ENCODE measurements at regions of chr10 and their contacts with region 1.

Region 1: DNA sequence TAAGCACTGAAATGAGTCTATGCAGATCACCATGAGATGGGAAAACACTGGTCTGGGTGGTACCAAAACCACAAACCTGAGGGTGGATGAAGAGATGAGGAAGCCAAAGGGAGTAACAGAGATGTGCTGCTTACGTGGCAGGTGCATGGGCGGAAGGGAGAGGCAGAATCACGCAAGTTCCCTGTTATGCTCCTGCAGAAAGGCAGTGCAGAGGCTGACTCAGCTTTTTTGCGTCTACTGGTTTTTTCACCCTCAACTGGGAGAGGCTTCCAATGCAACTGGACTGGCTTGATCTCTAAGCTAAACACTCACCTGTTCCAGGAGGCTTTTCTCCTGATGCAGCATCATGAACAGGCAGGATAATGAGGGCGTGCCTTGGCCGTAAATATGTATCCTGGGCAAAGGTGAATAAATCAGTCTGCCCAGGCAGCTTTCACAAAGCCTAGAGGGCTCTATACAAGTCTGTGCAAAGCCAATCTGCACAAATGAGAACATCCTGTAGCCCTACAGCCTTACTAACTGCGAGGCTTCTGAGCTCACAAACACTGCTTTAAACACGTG is 95.4 kb upstream of the AFAP1L2 start:
- DNase-seq: peak; percentile 66
- H3K4me3 Mint-ChIP-seq: peak overlapping the region; percentile 23
- H3K27ac Mint-ChIP-seq: peak overlapping the region; percentile 90
- H3K4me1 Mint-ChIP-seq: peaks cover 78% of the 10 kb centered on the region
- H3K27me3 Mint-ChIP-seq: no peaks in the 10 kb centered on the region

Region 2: DNA sequence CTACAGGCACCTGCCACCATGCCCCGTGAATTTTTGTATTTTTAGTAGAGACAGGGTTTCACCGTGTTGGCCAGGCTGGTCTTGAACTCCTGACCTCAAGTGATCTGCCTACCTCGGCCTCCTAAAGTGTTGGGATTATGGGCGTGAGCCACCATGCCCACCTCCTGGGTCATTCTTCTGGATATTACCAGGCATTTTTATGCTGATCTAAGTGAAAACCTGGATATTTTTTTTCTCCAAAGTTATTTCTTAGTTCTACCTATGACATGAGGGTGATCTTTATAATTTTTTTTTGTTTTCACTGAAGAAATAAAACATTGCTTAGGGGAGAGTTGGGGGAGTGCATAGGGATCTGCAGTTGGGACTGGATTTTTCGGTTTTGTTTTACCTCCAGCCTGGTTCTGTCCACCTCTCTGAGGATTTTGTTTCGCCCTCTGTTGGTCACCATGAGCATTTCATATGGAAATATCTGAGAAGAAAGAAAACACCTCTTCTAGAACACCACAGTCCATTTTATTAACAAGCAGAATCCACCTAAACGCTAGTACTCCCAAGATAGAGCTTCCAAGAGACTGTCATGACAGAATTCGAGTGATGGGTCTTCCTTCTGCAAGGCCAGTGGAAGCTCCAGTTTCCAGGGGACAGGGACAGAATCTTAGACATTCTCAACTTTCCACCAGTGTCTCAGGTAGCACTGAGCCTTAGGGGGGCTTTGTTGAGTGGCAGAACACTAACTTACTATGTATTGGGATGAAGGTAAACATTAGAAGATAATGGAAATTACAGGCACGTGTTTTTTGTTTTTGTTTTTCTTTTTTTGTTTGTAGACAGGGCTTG is 62.0 kb before region 1 on chr10:
- CTCF ChIA-PET with region 1: no interaction called
- POLR2A ChIA-PET with region 1: no interaction called
- DNase-seq: no peak
- H3K4me3 Mint-ChIP-seq: no peak overlapping the region
- H3K27ac Mint-ChIP-seq: no peak overlapping the region
- H3K4me1 Mint-ChIP-seq: no peaks in the 10 kb centered on the region
- H3K27me3 Mint-ChIP-seq: no peaks in the 10 kb centered on the region

Region 3: GRCh38 chr10:114448897-114449296 is 50.8 kb before region 1 on chr10:
- CTCF ChIA-PET with region 1: no interaction called
- POLR2A ChIA-PET with region 1: no interaction called
- DNase-seq: no peak
- H3K4me3 Mint-ChIP-seq: no peak overlapping the region
- H3K27ac Mint-ChIP-seq: no peak overlapping the region
- H3K4me1 Mint-ChIP-seq: no peaks in the 10 kb centered on the region
- H3K27me3 Mint-ChIP-seq: no peaks in the 10 kb centered on the region

Region 4: GRCh38 chr10:114486938-114487814 is 12.5 kb before region 1 on chr10:
- CTCF ChIA-PET with region 1: interaction called, 5 read pairs
- POLR2A ChIA-PET with region 1: interaction called, 26 read pairs
- DNase-seq: no peak
- H3K4me3 Mint-ChIP-seq: no peak overlapping the region
- H3K27ac Mint-ChIP-seq: peak overlapping the region; percentile 33
- H3K4me1 Mint-ChIP-seq: peaks cover 32% of the 10 kb centered on the region
- H3K27me3 Mint-ChIP-seq: no peaks in the 10 kb centered on the region